Activated T-helper 2 cell treated with anti-CD3 and anti-CD28 coated beads, Interferon-gamma antibody, Interleukin-2, Interleukin-4, amounts not matched to agents 10 μg/mL and 5 μg/mL and 100 μg/mL, durations not matched to agents 14 hours and 24 hours and 36 hours (primary cell): ENCODE measurements at regions of chr2 and their contacts with region 1.

Region 1: GRCh38 chr2:205024822-205025518 is 479.7 kb downstream of the PARD3B start:
- DNase-seq: peak; percentile 35
- H3K4me3 Mint-ChIP-seq: peak overlapping the region; percentile 22
- H3K27ac Mint-ChIP-seq: peak overlapping the region; percentile 43
- H3K4me1 Mint-ChIP-seq: peaks cover 32% of the 10 kb centered on the region
- H3K27me3 Mint-ChIP-seq: no peaks in the 10 kb centered on the region

Region 2: DNA sequence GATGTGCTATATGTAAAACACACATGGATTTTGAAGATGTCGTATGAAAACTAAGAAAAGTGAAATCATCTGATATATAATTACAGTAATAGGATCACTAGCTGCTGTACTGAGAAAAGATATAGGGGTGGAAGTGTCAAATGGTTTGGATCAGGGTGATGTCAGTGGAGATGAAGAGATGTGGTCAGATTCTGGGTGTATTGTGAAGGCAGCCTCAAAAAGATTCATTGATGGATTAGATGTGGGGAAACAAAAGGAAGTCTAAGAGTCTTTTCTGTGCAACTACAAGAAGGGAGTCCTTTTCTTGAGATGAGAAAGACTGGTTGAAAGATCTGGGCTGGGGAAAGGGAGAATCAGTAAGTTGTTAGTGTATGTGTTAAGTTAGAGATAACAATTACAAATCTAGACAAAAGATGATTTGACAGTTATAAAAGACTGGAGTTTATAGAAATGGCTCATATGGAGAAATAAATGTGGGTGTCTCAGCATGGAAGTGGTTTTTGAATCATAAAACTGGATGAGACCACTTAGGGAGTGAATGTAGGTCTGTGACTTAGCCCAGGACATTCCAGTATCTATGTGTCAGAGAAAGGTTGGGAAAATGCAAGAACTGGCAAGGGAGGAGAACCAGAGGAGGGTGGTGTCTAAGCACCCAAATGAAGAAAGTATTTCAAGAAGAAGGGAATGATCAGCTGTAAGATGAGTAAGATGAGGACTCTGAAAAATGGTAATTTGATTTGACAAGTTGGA is 132.3 kb before region 1 on chr2:
- intact Hi-C with region 1: loop called (anchors 1 kb)
- DNase-seq: peak; percentile 17
- H3K4me3 Mint-ChIP-seq: no peak overlapping the region
- H3K27ac Mint-ChIP-seq: no peak overlapping the region
- H3K4me1 Mint-ChIP-seq: peaks cover 14% of the 10 kb centered on the region
- H3K27me3 Mint-ChIP-seq: no peaks in the 10 kb centered on the region

Region 3: GRCh38 chr2:204958371-204958770 is 66.6 kb before region 1 on chr2:
- intact Hi-C with region 1: loop called (anchors 5 kb)
- DNase-seq: no peak
- H3K4me3 Mint-ChIP-seq: peak overlapping the region; percentile 69
- H3K27ac Mint-ChIP-seq: peak overlapping the region; percentile 71
- H3K4me1 Mint-ChIP-seq: peaks cover 38% of the 10 kb centered on the region
- H3K27me3 Mint-ChIP-seq: no peaks in the 10 kb centered on the region

Region 4: GRCh38 chr2:205002390-205002789 is 22.6 kb before region 1 on chr2:
- intact Hi-C with region 1: loop called (anchors 2 kb)
- DNase-seq: peak; percentile 39
- H3K4me3 Mint-ChIP-seq: no peak overlapping the region
- H3K27ac Mint-ChIP-seq: peak overlapping the region; percentile 14
- H3K4me1 Mint-ChIP-seq: peaks cover 37% of the 10 kb centered on the region
- H3K27me3 Mint-ChIP-seq: no peaks in the 10 kb centered on the region